ENCODE measurements at regions of chr2 and their contacts with region 1.

Region 1: GRCh38 chr2:26033818-26034636 is at the start of gene RAB10:
- DNase-seq: peak; percentile 100
- H3K4me3 Mint-ChIP-seq: peak within 1 kb of the TSS; percentile 94
- H3K27ac Mint-ChIP-seq: peak within 1 kb of the TSS; percentile 93
- H3K4me1 Mint-ChIP-seq: peaks cover 26% of the 10 kb centered on the region
- H3K27me3 Mint-ChIP-seq: no peaks in the 10 kb centered on the region
- total RNA-seq, gene RAB10: 128 and 130 TPM in 2 replicates

Region 2: DNA sequence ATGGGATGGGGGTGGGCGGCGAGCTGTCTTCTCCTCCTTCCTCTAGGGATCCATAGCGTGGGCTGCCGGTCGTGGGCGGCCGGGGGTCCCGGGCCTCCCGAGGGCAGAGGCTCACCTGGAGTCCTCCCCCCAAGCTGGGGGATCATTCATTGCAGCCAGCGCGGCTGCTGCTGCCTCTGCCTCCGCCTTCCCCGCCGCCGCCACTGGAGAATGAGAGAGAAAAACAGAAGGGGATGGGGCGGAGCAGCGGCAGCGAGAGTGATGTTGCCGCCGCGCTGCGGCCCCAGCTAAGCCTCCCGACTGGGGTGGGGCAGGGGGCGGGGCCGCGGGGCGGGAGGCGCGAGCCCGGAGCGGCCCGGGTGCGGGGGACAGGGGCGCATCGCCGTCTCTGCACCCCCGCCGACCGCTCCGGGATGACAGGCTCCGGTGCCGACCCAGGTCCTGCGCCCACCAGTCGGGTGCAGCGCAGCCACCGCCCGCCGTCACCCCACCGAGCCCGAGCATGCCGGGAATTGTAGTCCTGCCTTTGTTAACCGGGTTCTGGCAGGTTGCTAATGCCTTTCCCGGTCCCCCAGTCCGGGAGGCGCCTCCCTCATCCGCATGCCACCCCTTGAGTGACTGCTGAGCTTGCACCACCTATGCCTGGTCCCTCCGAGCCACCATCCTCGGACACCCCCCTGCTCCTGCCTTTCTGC is 51.6 kb before region 1 on chr2 and contains the start of gene KIF3C:
- intact Hi-C with region 1: loop called (anchors 1 kb)
- DNase-seq: peak; percentile 73
- H3K4me3 Mint-ChIP-seq: peak within 1 kb of the TSS; percentile 89
- H3K27ac Mint-ChIP-seq: peak within 1 kb of the TSS; percentile 53
- H3K4me1 Mint-ChIP-seq: peaks cover 17% of the 10 kb centered on the region
- H3K27me3 Mint-ChIP-seq: no peaks in the 10 kb centered on the region
- total RNA-seq, gene KIF3C: 5.3 and 6.2 TPM in 2 replicates

Region 3: DNA sequence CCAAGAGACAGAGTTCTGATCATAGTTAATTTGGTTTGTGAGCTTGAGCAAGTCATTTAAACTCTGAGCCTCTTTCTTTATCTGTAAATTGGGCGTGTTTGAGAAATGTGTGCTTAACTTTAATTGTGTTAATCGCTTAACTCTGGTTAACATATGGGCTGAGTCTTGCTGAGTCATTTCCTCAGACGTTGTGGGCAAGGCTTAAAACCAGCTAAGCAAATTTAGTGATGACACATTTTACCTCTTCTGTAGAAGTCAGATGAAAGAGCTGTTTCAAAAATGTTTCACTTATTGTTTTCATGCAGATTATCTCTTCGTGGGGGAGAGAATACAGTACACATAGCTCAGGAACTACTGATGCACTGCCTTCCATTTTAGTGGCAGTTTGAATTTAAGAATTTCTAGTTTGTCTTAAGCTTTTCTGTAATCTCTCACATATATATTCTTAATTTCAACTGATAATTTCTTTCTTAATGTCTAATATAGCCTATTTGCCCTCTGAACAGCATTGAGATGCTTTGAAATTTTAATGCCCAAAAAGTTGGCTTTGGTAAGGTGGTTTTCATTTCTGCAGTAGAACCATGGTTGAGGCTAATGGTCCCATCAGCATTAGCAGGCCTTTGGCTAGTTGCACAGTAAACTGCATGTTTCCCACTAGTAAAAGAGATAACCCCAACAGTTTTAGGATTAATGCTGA is 34.7 kb after region 1 on chr2:
- intact Hi-C with region 1: loop called (anchors 1 kb)
- DNase-seq: peak; percentile 64
- H3K4me3 Mint-ChIP-seq: peak overlapping the region; percentile 27
- H3K27ac Mint-ChIP-seq: peak overlapping the region; percentile 93
- H3K4me1 Mint-ChIP-seq: peaks cover 68% of the 10 kb centered on the region
- H3K27me3 Mint-ChIP-seq: no peaks in the 10 kb centered on the region

Region 4: DNA sequence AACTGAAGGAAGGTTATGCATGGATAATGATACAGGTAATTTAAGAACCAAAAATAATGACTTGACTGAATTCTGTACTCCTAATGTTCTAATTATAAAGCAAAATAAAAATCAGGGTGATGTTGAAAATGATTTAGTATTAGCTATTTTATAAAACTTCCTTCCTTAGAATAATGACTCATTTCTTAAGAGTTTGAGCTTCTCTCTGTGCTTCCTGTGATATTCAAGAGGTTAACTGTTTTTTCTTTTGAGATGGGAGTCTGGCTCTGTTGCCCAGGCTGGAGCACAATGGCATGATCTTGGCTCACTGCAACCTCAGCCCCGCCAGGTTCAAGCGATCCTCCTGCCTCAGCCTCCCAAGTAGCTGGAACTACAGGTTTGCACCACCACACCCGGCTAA is 195.6 kb after region 1 on chr2:
- intact Hi-C with region 1: no loop called
- DNase-seq: no peak
- H3K4me3 Mint-ChIP-seq: no peak overlapping the region
- H3K27ac Mint-ChIP-seq: no peak overlapping the region
- H3K4me1 Mint-ChIP-seq: no peaks in the 10 kb centered on the region
- H3K27me3 Mint-ChIP-seq: no peaks in the 10 kb centered on the region

Region 5: DNA sequence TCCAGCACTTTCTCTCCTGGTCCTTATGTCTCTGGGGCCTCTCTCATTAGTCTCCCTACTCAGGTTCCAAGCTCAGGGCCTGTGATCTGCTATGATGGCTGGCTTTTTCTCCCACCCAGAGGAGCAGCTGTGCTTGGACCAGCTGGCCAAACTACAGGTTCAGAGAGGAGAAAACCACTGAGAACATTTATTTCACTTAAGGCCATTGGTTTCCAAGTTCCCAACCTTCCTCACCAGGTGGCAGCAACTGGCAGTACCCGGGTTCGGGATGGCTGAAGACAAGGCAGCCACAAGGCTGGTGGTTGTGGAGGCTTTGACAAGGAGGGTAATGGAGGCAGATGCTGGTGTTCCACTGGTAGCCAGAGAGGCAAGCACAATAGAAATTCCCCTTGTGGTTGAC is 282.0 kb after region 1 on chr2:
- intact Hi-C with region 1: no loop called
- DNase-seq: no peak
- H3K4me3 Mint-ChIP-seq: no peak overlapping the region
- H3K27ac Mint-ChIP-seq: no peak overlapping the region
- H3K4me1 Mint-ChIP-seq: no peaks in the 10 kb centered on the region
- H3K27me3 Mint-ChIP-seq: peaks cover 6% of the 10 kb centered on the region

Measured in activated T-helper 1 cell treated with anti-CD3 and anti-CD28 coated beads, Interleukin-12 subunit alpha, Interleukin-12 subunit beta, Interleukin-2, Interleukin-4 antibody, amounts not matched to agents 30 ng/mL and 10 ng/mL and 1 ng/mL, durations not matched to agents 14 hours and 24 hours and 36 hours (primary cell).